CD8-positive, alpha-beta T cell (primary cell): ENCODE measurements at regions of chr1 and their contacts with region 1.

Region 1: DNA sequence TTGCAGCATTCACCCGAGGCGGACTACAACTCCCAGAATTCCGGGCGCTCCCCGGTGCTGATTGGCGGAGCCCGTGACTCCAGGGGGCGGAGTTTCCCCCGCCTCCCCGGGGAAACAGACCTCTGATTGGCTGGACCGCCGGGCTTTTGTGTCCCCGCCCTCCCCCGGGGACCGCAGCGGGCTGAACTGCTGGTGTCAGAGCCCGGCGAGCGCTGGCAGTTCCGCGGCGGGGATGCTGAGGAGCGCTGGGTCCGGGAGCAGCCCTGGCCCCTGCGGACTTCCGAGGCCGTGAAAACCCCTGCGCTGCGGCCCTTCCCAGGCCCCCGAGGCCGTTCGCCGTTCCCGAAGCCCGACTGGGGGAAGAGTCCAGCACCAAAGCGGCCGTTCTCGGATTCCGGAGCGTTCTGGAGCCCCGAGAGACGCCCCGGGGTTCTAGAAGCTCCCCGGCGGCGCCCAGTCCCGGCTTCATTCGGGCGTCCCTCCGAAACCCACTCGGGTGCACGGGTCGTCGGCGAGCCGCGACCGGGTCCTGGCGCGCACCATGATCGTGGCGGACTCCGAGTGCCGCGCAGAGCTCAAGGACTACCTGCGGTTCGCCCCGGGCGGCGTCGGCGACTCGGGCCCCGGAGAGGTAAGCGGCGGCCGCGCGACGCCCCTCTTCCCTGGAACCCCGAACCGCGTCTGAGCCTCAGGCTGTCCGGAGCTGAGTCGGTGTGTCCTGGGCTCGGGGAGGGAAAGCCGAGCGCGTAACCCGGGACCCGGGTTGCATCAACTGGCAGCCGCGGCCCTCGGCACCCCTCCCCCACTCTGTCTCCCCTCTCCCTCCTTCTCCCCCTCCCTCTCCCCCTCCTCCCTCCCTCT is at the start of gene SESN2:
- DNase-seq: peak; percentile 98 to 99 (median 99)
- ATAC-seq: peak; percentile 97
- H3K4me3 ChIP-seq: peak within 1 kb of the TSS; percentile 86 to 87
- H3K4me3 Mint-ChIP-seq: peak within 1 kb of the TSS; percentile 85
- H3K27ac ChIP-seq: peak within 1 kb of the TSS; percentile 52 to 72
- H3K27ac Mint-ChIP-seq: peak within 1 kb of the TSS; percentile 64
- H3K4me1 ChIP-seq: peaks cover 47% of the 10 kb centered on the region
- H3K4me1 Mint-ChIP-seq: peaks cover 44% of the 10 kb centered on the region
- H3K27me3 ChIP-seq: no peaks in the 10 kb centered on the region
- H3K27me3 Mint-ChIP-seq: no peaks in the 10 kb centered on the region
- CTCF ChIP-seq: no peak
- total RNA-seq, gene SESN2: 15.0 to 15.3 TPM

Region 2: GRCh38 chr1:27504588-27505419 is 754.7 kb before region 1 on chr1:
- CTCF ChIA-PET with region 1: no interaction called
- POLR2A ChIA-PET with region 1: no interaction called
- intact Hi-C with region 1: no loop called
- DNase-seq: no peak
- ATAC-seq: no peak
- H3K4me3 ChIP-seq: no peak overlapping the region
- H3K4me3 Mint-ChIP-seq: no peak overlapping the region
- H3K27ac ChIP-seq: no peak overlapping the region
- H3K27ac Mint-ChIP-seq: no peak overlapping the region
- H3K4me1 ChIP-seq: no peaks in the 10 kb centered on the region
- H3K4me1 Mint-ChIP-seq: no peaks in the 10 kb centered on the region
- H3K27me3 ChIP-seq: no peaks in the 10 kb centered on the region
- H3K27me3 Mint-ChIP-seq: no peaks in the 10 kb centered on the region
- CTCF ChIP-seq: no peak

Region 3: GRCh38 chr1:28235755-28236655 is 23.5 kb before region 1 on chr1 and contains the start of gene ATP5IF1:
- CTCF ChIA-PET with region 1: no interaction called
- POLR2A ChIA-PET with region 1: interaction called, 5 read pairs
- intact Hi-C with region 1: loop called (anchors 1 kb)
- DNase-seq: peak; percentile 90 to 98 (median 94)
- ATAC-seq: peak; percentile 95
- H3K4me3 ChIP-seq: peak within 1 kb of the TSS; percentile 80 to 96
- H3K4me3 Mint-ChIP-seq: no peak within 1 kb of the TSS
- H3K27ac ChIP-seq: peak within 1 kb of the TSS; percentile 84 to 96
- H3K27ac Mint-ChIP-seq: no peak within 1 kb of the TSS
- H3K4me1 ChIP-seq: peaks cover 41% of the 10 kb centered on the region
- H3K4me1 Mint-ChIP-seq: peaks cover 21% of the 10 kb centered on the region
- H3K27me3 ChIP-seq: no peaks in the 10 kb centered on the region
- H3K27me3 Mint-ChIP-seq: no peaks in the 10 kb centered on the region
- CTCF ChIP-seq: no peak
- total RNA-seq, gene ATP5IF1: 66.1 to 69.3 TPM

Region 4: GRCh38 chr1:28369371-28370238 is 110.1 kb after region 1 on chr1 and contains the start of gene PHACTR4:
- CTCF ChIA-PET with region 1: no interaction called
- POLR2A ChIA-PET with region 1: no interaction called
- intact Hi-C with region 1: loop called in 1 of 2 experiments (anchors 1 kb)
- DNase-seq: peak; percentile 44 to 87 (median 76)
- ATAC-seq: peak; percentile 88
- H3K4me3 ChIP-seq: peak within 1 kb of the TSS; percentile 70 to 90
- H3K4me3 Mint-ChIP-seq: peak within 1 kb of the TSS; percentile 96
- H3K27ac ChIP-seq: peak within 1 kb of the TSS; percentile 67 to 83
- H3K27ac Mint-ChIP-seq: peak within 1 kb of the TSS; percentile 94
- H3K4me1 ChIP-seq: peaks cover 5% of the 10 kb centered on the region
- H3K4me1 Mint-ChIP-seq: peaks cover 34% of the 10 kb centered on the region
- H3K27me3 ChIP-seq: no peaks in the 10 kb centered on the region
- H3K27me3 Mint-ChIP-seq: no peaks in the 10 kb centered on the region
- CTCF ChIP-seq: peak; percentile 30
- total RNA-seq, gene PHACTR4: 19.3 to 25.2 TPM

Region 5: GRCh38 chr1:28518000-28518744 is 258.6 kb after region 1 on chr1:
- CTCF ChIA-PET with region 1: no interaction called
- POLR2A ChIA-PET with region 1: no interaction called
- intact Hi-C with region 1: loop called in 1 of 2 experiments (anchors 1 kb)
- DNase-seq: peak; percentile 76 to 93 (median 88)
- ATAC-seq: peak; percentile 91
- H3K4me3 ChIP-seq: peak overlapping the region; percentile 59 to 79
- H3K4me3 Mint-ChIP-seq: peak overlapping the region; percentile 89
- H3K27ac ChIP-seq: peak overlapping the region; percentile 55 to 57
- H3K27ac Mint-ChIP-seq: peak overlapping the region; percentile 84
- H3K4me1 ChIP-seq: peaks cover 21% of the 10 kb centered on the region
- H3K4me1 Mint-ChIP-seq: peaks cover 28% of the 10 kb centered on the region
- H3K27me3 ChIP-seq: no peaks in the 10 kb centered on the region
- H3K27me3 Mint-ChIP-seq: no peaks in the 10 kb centered on the region
- CTCF ChIP-seq: peak; percentile 98

Region 6: DNA sequence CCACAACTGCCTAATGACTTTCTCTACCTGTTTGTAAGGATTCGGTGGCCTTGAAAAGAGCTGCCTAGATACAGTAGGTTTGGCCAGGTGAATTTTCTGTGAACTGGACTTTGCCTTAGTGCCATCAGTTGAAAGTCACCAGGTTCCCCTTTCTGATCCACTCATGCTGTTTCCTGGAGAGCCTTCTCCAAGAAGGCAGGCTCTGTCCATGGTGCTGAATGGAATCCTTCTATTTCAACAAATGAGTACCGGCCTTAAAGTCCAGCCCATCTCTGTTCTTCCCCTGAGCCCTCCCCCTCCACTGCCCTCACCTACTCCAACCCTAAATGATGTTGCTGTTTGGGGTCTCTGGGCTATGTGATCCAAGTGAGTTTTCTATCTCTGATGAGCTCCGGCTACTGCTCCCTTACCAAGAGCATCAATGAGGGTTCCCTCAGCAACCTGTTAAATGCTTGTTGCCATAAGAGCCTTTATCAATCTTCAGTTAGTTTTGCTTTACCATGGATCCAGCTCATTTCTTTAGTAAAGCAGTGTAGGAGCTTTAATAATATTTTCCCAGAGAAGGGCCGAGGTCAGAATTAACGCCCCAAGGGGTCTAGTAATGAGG is 1477.1 kb after region 1 on chr1:
- CTCF ChIA-PET with region 1: no interaction called
- POLR2A ChIA-PET with region 1: no interaction called
- intact Hi-C with region 1: no loop called
- DNase-seq: no peak
- ATAC-seq: no peak
- H3K4me3 ChIP-seq: no peak overlapping the region
- H3K4me3 Mint-ChIP-seq: no peak overlapping the region
- H3K27ac ChIP-seq: no peak overlapping the region
- H3K27ac Mint-ChIP-seq: no peak overlapping the region
- H3K4me1 ChIP-seq: no peaks in the 10 kb centered on the region
- H3K4me1 Mint-ChIP-seq: no peaks in the 10 kb centered on the region
- H3K27me3 ChIP-seq: no peaks in the 10 kb centered on the region
- H3K27me3 Mint-ChIP-seq: peaks cover 12% of the 10 kb centered on the region
- CTCF ChIP-seq: no peak